ENCODE measurements at regions of chrX and their contacts with region 1.

Region 1: DNA sequence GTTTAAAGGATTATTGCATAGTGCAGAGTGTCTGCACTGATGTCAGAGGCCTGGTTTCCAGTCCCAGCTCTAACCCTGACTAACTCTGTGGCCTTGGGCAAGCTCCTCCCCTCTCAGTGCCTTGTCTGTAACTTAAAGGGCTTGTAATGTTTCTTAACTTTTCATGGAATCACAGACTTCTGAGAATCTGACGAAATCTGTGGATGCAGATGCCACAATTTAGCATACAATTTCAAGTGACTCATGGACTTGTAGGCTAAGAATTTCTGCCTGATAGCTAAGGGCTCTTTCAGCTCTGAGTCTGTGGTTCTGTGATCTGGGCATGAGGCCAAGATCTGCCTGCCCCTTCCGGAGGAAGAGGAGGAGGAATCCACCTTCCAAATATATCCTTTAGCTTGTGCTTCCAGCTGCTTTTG is 236.9 kb downstream of the AR start:
- DNase-seq: peak; percentile 87 to 90 (median 89)
- ATAC-seq: peak; percentile 95 to 97
- H3K4me3 ChIP-seq: no peak overlapping the region
- H3K27ac ChIP-seq: peak overlapping the region; percentile 94
- H3K4me1 ChIP-seq: peaks cover 13% of the 10 kb centered on the region
- H3K27me3 ChIP-seq: no peaks in the 10 kb centered on the region

Region 2: DNA sequence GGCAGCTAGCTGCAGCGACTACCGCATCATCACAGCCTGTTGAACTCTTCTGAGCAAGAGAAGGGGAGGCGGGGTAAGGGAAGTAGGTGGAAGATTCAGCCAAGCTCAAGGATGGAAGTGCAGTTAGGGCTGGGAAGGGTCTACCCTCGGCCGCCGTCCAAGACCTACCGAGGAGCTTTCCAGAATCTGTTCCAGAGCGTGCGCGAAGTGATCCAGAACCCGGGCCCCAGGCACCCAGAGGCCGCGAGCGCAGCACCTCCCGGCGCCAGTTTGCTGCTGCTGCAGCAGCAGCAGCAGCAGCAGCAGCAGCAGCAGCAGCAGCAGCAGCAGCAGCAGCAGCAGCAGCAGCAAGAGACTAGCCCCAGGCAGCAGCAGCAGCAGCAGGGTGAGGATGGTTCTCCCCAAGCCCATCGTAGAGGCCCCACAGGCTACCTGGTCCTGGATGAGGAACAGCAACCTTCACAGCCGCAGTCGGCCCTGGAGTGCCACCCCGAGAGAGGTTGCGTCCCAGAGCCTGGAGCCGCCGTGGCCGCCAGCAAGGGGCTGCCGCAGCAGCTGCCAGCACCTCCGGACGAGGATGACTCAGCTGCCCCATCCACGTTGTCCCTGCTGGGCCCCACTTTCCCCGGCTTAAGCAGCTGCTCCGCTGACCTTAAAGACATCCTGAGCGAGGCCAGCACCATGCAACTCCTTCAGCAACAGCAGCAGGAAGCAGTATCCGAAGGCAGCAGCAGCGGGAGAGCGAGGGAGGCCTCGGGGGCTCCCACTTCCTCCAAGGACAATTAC is 235.5 kb before region 1 on chrX:
- intact Hi-C with region 1: loop called in 1 of 4 experiments (anchors 5 kb)
- DNase-seq: peak; percentile 30 to 58 (median 57)
- ATAC-seq: peak; percentile 11 to 48
- H3K4me3 ChIP-seq: peak overlapping the region; percentile 63
- H3K27ac ChIP-seq: no peak overlapping the region
- H3K4me1 ChIP-seq: no peaks in the 10 kb centered on the region
- H3K27me3 ChIP-seq: no peaks in the 10 kb centered on the region

Region 3: GRCh38 chrX:67692246-67692645 is 88.5 kb before region 1 on chrX:
- intact Hi-C with region 1: no loop called
- DNase-seq: no peak
- ATAC-seq: no peak
- H3K4me3 ChIP-seq: no peak overlapping the region
- H3K27ac ChIP-seq: no peak overlapping the region
- H3K4me1 ChIP-seq: peaks cover 6% of the 10 kb centered on the region
- H3K27me3 ChIP-seq: no peaks in the 10 kb centered on the region

Region 4: GRCh38 chrX:68746988-68747387 is 966.3 kb after region 1 on chrX:
- intact Hi-C with region 1: no loop called
- DNase-seq: no peak
- ATAC-seq: no peak
- H3K4me3 ChIP-seq: no peak overlapping the region
- H3K27ac ChIP-seq: no peak overlapping the region
- H3K4me1 ChIP-seq: peaks cover 2% of the 10 kb centered on the region
- H3K27me3 ChIP-seq: no peaks in the 10 kb centered on the region

Measured in right cardiac atrium (tissue), 5 donors.